HCT116 (cell line): ENCODE measurements at regions of chr6 and their contacts with region 1.

Region 1: GRCh38 chr6:11653028-11653583 is 115.6 kb downstream of the TMEM170B start:
- DNase-seq: no peak
- ATAC-seq: no peak
- H3K4me3 ChIP-seq: no peak overlapping the region
- H3K27ac ChIP-seq: no peak overlapping the region
- H3K4me1 ChIP-seq: peaks cover 6 to 19% of the 10 kb centered on the region in 2 experiments
- H3K27me3 ChIP-seq: no peaks in the 10 kb centered on the region
- CTCF ChIP-seq: no peak
- POLR2A ChIP-seq: no peak
- RAD21 ChIP-seq: no peak

Region 2: GRCh38 chr6:11685152-11686093 is 32.3 kb after region 1 on chr6:
- CTCF ChIA-PET with region 1: no interaction called
- POLR2A ChIA-PET with region 1: no interaction called
- RAD21 ChIA-PET with region 1: no interaction called
- intact Hi-C with region 1: no loop called
- DNase-seq: peak; percentile 36
- ATAC-seq: peak; percentile 90
- H3K4me3 ChIP-seq: peak overlapping the region in 1 of 2 experiments; percentile 10; a peak in 1 of 4 replicates
- H3K27ac ChIP-seq: no peak overlapping the region
- H3K4me1 ChIP-seq: peaks cover 0 to 20% of the 10 kb centered on the region in 2 experiments; a peak in 3 of 4 replicates
- H3K27me3 ChIP-seq: no peaks in the 10 kb centered on the region
- CTCF ChIP-seq: no peak
- POLR2A ChIP-seq: no peak
- RAD21 ChIP-seq: no peak

Region 3: DNA sequence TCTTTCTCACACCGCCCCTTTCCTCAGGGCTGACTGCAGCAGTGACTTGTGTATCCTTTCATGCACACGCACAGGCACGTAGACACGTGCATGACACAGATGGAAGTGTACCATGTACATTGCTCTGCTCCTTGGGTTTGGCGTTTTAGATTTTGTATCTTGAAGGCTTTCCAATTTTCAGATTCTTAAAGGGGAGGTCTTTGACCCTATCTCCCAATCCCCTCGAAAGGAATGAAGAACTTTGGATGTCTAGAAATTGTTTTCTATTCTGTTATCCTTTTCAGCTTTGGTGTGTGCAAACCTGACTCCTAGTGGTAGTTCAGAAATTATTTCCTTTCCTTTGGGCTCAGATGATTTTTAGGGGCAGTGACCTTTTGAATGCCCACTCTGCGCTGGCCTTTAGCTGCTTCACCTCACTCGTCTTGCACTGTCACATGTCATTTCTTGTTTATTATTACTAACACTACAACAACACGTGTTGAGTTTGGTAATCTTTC is 422.0 kb after region 1 on chr6:
- CTCF ChIA-PET with region 1: interaction called, 4 read pairs
- POLR2A ChIA-PET with region 1: no interaction called
- RAD21 ChIA-PET with region 1: no interaction called
- intact Hi-C with region 1: loop called (anchors 1 kb)
- DNase-seq: no peak
- ATAC-seq: no peak
- H3K4me3 ChIP-seq: no peak overlapping the region
- H3K27ac ChIP-seq: no peak overlapping the region
- H3K4me1 ChIP-seq: peaks cover 0 to 4% of the 10 kb centered on the region in 2 experiments; a peak in 1 of 4 replicates
- H3K27me3 ChIP-seq: no peaks in the 10 kb centered on the region
- CTCF ChIP-seq: peak; percentile 9 to 43 (median 35); a peak in 4 of 6 replicates
- POLR2A ChIP-seq: no peak
- RAD21 ChIP-seq: peak; percentile 51

Region 4: DNA sequence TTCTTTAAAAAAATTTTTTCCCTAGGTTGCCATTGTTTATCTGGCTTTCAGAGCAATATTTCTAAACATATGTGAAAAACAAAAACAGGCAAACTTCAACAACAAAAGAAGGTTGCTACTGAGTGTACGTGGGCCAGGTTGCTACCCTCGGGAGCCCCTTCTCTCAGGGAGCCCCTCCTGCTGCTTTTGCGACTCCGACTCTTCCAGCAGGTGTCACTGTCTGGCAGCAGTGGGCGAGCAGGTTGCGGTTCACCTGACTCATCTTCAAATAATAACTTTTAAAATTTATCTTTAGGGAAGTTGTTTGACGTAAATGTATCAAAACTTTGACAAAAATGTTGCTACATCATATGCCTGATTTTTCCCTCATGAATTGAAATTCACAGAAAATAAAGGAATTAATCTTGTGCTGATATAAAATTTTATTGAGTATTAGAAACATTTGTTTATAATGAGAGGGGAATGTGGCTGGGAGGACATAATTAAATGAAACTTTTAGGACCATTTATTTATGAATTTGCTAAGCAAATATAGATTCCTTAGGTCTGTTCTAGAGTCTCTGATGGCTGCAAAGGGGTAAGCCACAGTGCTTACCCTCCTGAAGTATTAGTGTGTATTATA is 497.8 kb after region 1 on chr6:
- CTCF ChIA-PET with region 1: no interaction called
- POLR2A ChIA-PET with region 1: no interaction called
- RAD21 ChIA-PET with region 1: no interaction called
- intact Hi-C with region 1: loop called (anchors 5 kb)
- DNase-seq: peak; percentile 19
- ATAC-seq: peak; percentile 84
- H3K4me3 ChIP-seq: no peak overlapping the region
- H3K27ac ChIP-seq: no peak overlapping the region
- H3K4me1 ChIP-seq: peaks cover 0 to 10% of the 10 kb centered on the region in 2 experiments; a peak in 2 of 4 replicates
- H3K27me3 ChIP-seq: no peaks in the 10 kb centered on the region
- CTCF ChIP-seq: peak; percentile 66 to 89 (median 83)
- POLR2A ChIP-seq: no peak
- RAD21 ChIP-seq: peak; percentile 79

Region 5: DNA sequence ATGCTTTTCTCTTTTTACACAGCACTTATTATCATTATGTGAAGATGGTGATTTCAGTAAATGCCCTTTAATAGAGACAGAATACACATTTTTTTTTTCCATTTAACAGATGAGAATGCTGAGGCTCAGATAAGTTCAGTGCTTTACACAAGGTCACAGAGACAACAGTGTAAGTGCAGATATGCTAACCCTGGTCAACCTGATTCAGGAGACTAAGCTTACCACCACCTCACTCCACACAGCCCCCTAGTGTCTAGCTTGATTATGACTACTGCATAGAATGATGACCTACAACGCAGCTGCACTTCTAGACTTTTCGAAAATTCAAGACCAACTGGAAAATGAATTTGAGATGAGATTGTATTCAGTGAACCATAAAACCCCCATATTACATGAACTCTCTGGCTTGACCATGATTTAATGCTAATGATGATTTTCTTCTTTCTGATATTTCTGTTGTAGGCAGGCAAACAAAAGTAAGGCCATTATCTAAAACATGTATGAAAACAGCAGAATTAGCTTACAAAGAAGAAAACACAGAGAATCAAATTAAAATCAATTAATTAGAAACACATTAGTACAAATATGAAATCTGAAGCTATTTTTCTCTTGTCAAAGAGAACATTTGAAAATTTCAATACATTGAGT is 851.3 kb after region 1 on chr6:
- CTCF ChIA-PET with region 1: no interaction called
- POLR2A ChIA-PET with region 1: no interaction called
- RAD21 ChIA-PET with region 1: no interaction called
- intact Hi-C with region 1: loop called (anchors 10 kb)
- DNase-seq: peak; percentile 48
- ATAC-seq: peak; percentile 96
- H3K4me3 ChIP-seq: no peak overlapping the region
- H3K27ac ChIP-seq: no peak overlapping the region
- H3K4me1 ChIP-seq: no peaks in the 10 kb centered on the region
- H3K27me3 ChIP-seq: no peaks in the 10 kb centered on the region
- CTCF ChIP-seq: peak; percentile 39 to 76 (median 65); a peak in 5 of 6 replicates
- POLR2A ChIP-seq: no peak
- RAD21 ChIP-seq: peak; percentile 66

Region 6: DNA sequence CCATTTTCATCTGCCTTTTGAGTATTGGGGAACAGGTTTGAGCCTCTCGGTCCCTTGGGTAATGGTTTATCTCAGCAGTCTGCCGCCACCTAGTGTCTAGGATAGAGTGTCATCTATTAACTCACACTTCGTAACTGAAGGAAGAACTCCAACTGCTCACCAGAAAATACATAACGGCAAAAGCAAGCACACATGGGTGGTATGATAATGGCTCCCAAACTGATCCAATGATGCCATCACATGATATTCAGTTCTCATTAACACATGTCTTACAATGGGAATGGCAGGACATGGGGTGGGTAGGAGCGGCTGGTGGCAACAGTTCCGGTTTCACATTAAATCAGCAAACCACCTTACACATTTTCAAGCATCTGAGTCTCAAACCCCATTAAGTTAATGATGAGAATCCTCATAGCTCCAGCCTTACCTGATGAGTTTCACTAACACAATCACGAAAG is 952.8 kb after region 1 on chr6:
- CTCF ChIA-PET with region 1: interaction called, 5 read pairs
- POLR2A ChIA-PET with region 1: no interaction called
- RAD21 ChIA-PET with region 1: no interaction called
- intact Hi-C with region 1: loop called (anchors 1 kb)
- DNase-seq: peak; percentile 65
- ATAC-seq: peak; percentile 95
- H3K4me3 ChIP-seq: peak overlapping the region in 1 of 2 experiments; percentile 6; a peak in 1 of 4 replicates
- H3K27ac ChIP-seq: no peak overlapping the region
- H3K4me1 ChIP-seq: no peaks in the 10 kb centered on the region; a peak in 1 of 4 replicates
- H3K27me3 ChIP-seq: no peaks in the 10 kb centered on the region
- CTCF ChIP-seq: peak; percentile 58 to 82 (median 68); a peak in 5 of 6 replicates
- POLR2A ChIP-seq: no peak
- RAD21 ChIP-seq: peak; percentile 84